Activated CD8-positive, alpha-beta T cell treated with anti-CD3 and anti-CD28 coated beads for 36 hours (primary cell): ENCODE measurements at regions of chr7 and their contacts with region 1.

Region 1: DNA sequence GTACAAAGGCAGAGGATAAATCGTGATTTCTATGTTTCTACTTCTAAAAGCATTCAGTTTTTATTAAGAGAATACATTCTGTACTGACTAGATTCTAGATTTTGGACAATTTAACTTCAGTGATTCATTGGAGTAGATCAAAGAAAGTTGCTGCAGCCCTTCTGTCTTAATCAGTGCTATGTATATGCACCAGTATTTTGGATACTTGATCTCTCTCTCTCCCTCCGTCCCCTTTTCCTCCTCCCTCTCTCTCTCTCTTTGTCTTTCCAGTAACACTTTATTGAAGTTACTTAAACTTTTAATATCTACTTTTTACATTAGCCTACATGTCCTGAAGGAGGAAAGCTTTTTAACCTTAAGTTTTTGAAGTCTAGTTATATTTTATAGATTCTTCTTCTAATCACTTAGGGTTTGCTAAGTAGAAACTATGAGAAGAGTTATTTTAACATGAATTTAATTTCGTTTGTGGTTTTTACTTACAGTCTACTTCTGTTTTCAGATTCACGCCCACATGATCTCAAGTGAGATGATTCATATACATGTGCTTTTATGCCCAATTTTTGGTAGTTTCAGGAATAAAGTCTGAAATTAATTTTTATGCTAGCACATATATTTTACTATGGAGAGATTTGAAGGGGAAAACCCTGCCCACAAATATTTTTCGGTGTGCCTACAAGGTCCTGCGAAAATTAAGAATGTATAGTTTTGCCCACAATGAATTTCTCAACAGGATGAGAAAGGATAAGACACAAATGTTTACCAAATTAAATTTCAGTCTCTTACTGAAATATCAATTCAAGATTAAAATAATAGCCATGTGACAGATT is 9.1 kb downstream of the MDFIC start:
- DNase-seq: no peak
- ATAC-seq: peak; percentile 60
- H3K4me3 Mint-ChIP-seq: no peak overlapping the region
- H3K27ac Mint-ChIP-seq: no peak overlapping the region
- H3K4me1 Mint-ChIP-seq: peaks cover 54% of the 10 kb centered on the region
- H3K27me3 Mint-ChIP-seq: no peaks in the 10 kb centered on the region
- CTCF ChIP-seq: no peak

Region 2: GRCh38 chr7:114889646-114890285 is 41.3 kb before region 1 on chr7:
- CTCF ChIA-PET with region 1: no interaction called
- POLR2A ChIA-PET with region 1: interaction called, 4 read pairs
- intact Hi-C with region 1: loop called (anchors 1 kb)
- DNase-seq: peak; percentile 28
- ATAC-seq: peak; percentile 98
- H3K4me3 Mint-ChIP-seq: no peak overlapping the region
- H3K27ac Mint-ChIP-seq: peak overlapping the region; percentile 92
- H3K4me1 Mint-ChIP-seq: peaks cover 36% of the 10 kb centered on the region
- H3K27me3 Mint-ChIP-seq: no peaks in the 10 kb centered on the region
- CTCF ChIP-seq: no peak

Region 3: DNA sequence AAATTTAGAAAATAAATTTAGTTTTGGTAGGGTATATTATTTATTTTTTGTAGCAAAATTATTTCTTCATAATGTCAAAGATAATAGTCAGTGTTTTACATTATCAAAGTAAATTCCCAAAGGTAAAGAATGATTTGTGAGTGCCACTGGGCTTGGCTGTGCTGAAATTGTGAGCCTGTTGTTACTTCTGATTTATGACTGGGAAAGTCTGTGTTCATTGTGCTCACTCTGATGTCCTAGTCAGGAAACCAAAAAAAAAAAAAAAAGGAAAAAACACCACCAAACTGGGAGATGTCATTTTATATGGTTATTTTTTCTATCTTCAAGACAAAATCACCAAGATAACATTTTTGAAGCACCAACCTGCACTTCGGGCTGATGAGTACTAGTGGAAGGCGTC is 35.1 kb after region 1 on chr7:
- CTCF ChIA-PET with region 1: no interaction called
- POLR2A ChIA-PET with region 1: no interaction called
- intact Hi-C with region 1: no loop called
- DNase-seq: no peak
- ATAC-seq: no peak
- H3K4me3 Mint-ChIP-seq: no peak overlapping the region
- H3K27ac Mint-ChIP-seq: no peak overlapping the region
- H3K4me1 Mint-ChIP-seq: peaks cover 57% of the 10 kb centered on the region
- H3K27me3 Mint-ChIP-seq: no peaks in the 10 kb centered on the region
- CTCF ChIP-seq: no peak

Region 4: GRCh38 chr7:115008465-115009114 is 77.5 kb after region 1 on chr7:
- CTCF ChIA-PET with region 1: interaction called, 11 read pairs
- POLR2A ChIA-PET with region 1: interaction called, 4 read pairs
- intact Hi-C with region 1: loop called (anchors 2 kb)
- DNase-seq: peak; percentile 20
- ATAC-seq: peak; percentile 57
- H3K4me3 Mint-ChIP-seq: peak overlapping the region; percentile 54
- H3K27ac Mint-ChIP-seq: peak overlapping the region; percentile 89
- H3K4me1 Mint-ChIP-seq: peaks cover 61% of the 10 kb centered on the region
- H3K27me3 Mint-ChIP-seq: no peaks in the 10 kb centered on the region
- CTCF ChIP-seq: no peak